ENCODE measurements at regions of chr3 and their contacts with region 1.

Region 1: GRCh38 chr3:108342837-108343478 is 46.6 kb downstream of the HHLA2 start:
- DNase-seq: no peak
- ATAC-seq: no peak
- H3K4me3 ChIP-seq: no peak overlapping the region
- H3K4me3 Mint-ChIP-seq: peak overlapping the region in 1 of 10 donors; percentile 2
- H3K27ac ChIP-seq: no peak overlapping the region
- H3K27ac Mint-ChIP-seq: peak overlapping the region in 1 of 9 donors; percentile 62
- H3K4me1 ChIP-seq: no peaks in the 10 kb centered on the region
- H3K4me1 Mint-ChIP-seq: peaks cover 0 to 25% (median 0%) of the 10 kb centered on the region in 7 donors
- H3K27me3 ChIP-seq: no peaks in the 10 kb centered on the region
- H3K27me3 Mint-ChIP-seq: peaks cover 0 to 4% (median 2%) of the 10 kb centered on the region in 5 donors

Region 2: DNA sequence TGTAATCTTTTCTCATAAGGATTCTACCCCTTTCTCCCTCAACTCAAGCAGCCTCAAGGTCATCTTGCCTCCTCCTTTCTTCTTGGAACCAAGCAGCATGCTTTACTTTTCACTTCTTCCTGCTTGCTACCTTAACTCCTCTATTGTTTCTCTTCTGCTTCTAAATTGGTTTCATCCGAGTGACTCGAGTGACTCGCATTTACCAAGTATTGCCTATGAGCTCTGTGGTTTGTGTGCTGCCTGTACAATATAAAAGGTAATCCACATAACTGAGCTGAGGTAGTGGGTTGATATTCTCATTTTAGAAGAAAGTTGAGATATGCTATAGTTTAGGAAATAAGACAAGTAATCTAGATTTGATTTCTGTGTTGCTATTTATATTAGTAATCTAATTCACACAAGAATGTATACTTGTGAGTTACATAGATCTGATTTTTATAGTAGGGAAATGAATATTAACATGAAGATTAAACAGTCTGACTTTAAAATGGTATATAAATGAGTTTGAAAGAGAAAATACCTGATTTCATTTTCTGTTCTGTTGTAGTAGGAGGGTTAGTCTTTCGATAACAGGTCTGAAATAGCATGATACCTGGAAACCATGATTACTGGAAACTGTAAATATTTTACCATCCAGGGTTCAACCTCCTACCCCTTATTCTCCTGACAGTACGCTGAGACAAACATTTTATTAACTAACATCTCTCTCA is 41.1 kb before region 1 on chr3:
- CTCF ChIA-PET with region 1: no interaction called
- POLR2A ChIA-PET with region 1: no interaction called
- intact Hi-C with region 1: loop called in 1 of 2 experiments (anchors 2 kb)
- DNase-seq: peak in 3 of 9 donors; percentile 11 to 16 (median 16)
- ATAC-seq: peak; percentile 26
- H3K4me3 ChIP-seq: peak overlapping the region; percentile 21
- H3K4me3 Mint-ChIP-seq: peak overlapping the region in 8 of 10 donors; percentile 6 to 73 (median 49)
- H3K27ac ChIP-seq: no peak overlapping the region
- H3K27ac Mint-ChIP-seq: peak overlapping the region in 3 of 9 donors; percentile 14 to 87 (median 37)
- H3K4me1 ChIP-seq: no peaks in the 10 kb centered on the region
- H3K4me1 Mint-ChIP-seq: peaks cover 17 to 60% (median 24%) of the 10 kb centered on the region in 7 donors
- H3K27me3 ChIP-seq: no peaks in the 10 kb centered on the region
- H3K27me3 Mint-ChIP-seq: no peaks in the 10 kb centered on the region

Region 3: DNA sequence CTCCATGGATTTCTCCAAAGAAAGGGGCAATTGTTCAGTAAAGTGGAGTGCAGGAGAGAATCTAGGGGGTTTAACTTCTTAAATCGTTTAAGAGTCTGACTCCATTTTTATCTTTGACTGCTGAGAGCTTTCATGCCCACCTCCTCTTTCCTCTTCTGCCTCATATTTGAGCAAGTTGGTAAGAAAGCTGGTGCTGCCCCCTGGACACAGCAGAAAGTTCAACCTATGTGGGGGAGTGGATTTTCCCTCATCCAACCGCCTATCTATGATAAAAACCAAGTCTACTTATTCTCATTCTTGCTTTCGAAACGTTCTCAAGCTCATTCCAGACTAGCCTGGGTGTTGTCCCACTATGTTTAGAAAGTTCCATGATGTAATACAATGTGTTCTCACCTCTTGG is 20.6 kb before region 1 on chr3:
- CTCF ChIA-PET with region 1: no interaction called
- POLR2A ChIA-PET with region 1: no interaction called
- intact Hi-C with region 1: no loop called
- DNase-seq: peak in 5 of 9 donors; percentile 16 to 40 (median 36)
- ATAC-seq: no peak
- H3K4me3 ChIP-seq: no peak overlapping the region
- H3K4me3 Mint-ChIP-seq: no peak overlapping the region
- H3K27ac ChIP-seq: no peak overlapping the region
- H3K27ac Mint-ChIP-seq: no peak overlapping the region
- H3K4me1 ChIP-seq: no peaks in the 10 kb centered on the region
- H3K4me1 Mint-ChIP-seq: peaks cover 0 to 21% (median 5%) of the 10 kb centered on the region in 7 donors
- H3K27me3 ChIP-seq: no peaks in the 10 kb centered on the region
- H3K27me3 Mint-ChIP-seq: no peaks in the 10 kb centered on the region

Region 4: GRCh38 chr3:109853077-109853731 is 1510.2 kb after region 1 on chr3:
- CTCF ChIA-PET with region 1: no interaction called
- POLR2A ChIA-PET with region 1: no interaction called
- intact Hi-C with region 1: loop called in 1 of 2 experiments (anchors 5 kb)
- DNase-seq: no peak
- ATAC-seq: no peak
- H3K4me3 ChIP-seq: no peak overlapping the region
- H3K4me3 Mint-ChIP-seq: no peak overlapping the region
- H3K27ac ChIP-seq: no peak overlapping the region
- H3K27ac Mint-ChIP-seq: no peak overlapping the region
- H3K4me1 ChIP-seq: no peaks in the 10 kb centered on the region
- H3K4me1 Mint-ChIP-seq: peaks cover 0 to 6% (median 0%) of the 10 kb centered on the region in 7 donors
- H3K27me3 ChIP-seq: no peaks in the 10 kb centered on the region
- H3K27me3 Mint-ChIP-seq: no peaks in the 10 kb centered on the region